ENCODE measurements at regions of chr18 and their contacts with region 1.

Region 1: DNA sequence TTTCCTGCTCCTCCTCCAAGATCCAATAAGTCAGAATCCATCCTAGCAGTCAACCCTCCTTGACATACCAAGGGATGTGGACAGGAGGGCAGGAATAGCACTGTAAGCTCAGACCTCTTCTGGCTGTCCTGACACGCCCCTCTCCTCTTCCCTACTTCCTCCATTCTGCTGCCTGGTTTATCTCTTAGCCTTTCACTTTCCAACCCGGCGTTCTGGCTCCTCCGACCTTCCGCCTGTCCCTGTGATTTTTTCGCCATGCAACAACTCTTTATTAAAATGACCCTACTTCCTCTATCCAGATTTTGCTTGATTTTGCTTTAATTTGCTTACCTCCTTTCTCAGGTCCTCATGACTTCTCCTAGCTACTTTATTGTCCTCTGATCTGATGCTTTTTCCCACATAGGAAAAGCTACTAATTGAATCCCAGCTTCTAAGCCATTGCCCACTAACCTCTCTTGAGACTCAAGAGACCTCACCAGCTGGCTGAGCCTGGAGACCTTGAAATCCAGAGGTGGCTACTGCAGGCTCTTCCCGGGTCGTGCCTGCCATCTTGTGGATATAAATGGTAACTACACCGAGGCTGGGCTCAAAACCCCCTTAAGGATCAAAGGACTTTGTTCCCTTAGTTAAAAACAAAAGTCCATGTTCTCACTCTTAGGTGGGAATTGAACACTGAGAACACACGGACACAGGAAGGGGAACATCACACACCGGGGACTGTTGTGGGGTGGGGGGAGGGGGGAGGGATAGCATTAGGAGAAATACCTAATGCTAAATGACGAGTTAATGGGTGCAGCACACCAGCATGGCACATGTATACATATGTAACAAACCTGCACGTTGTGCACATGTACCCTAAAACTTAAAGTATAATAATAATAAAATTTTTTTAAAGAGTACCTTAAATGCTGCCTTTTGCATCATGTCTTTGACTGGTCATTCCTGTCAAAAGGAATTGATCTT is 139.4 kb downstream of the AKAIN1 start:
- DNase-seq: peak; percentile 59 to 81 (median 79)
- H3K4me3 ChIP-seq: no peak overlapping the region
- H3K27ac ChIP-seq: no peak overlapping the region
- H3K4me1 ChIP-seq: peaks cover 5 to 26% (median 15%) of the 10 kb centered on the region in 4 experiments
- H3K27me3 ChIP-seq: no peaks in the 10 kb centered on the region

Region 2: GRCh38 chr18:4106407-4107033 is 951.1 kb before region 1 on chr18:
- CTCF ChIA-PET with region 1: interaction called, 63 read pairs
- POLR2A ChIA-PET with region 1: no interaction called
- DNase-seq: peak; percentile 43 to 77 (median 67)
- H3K4me3 ChIP-seq: no peak overlapping the region
- H3K27ac ChIP-seq: no peak overlapping the region
- H3K4me1 ChIP-seq: no peaks in the 10 kb centered on the region
- H3K27me3 ChIP-seq: peaks cover 0 to 6% (median 0%) of the 10 kb centered on the region in 5 experiments

Region 3: GRCh38 chr18:5073026-5073944 is 15.6 kb after region 1 on chr18:
- CTCF ChIA-PET with region 1: interaction called, 22 read pairs
- POLR2A ChIA-PET with region 1: no interaction called
- DNase-seq: peak; percentile 67 to 85 (median 78)
- H3K4me3 ChIP-seq: no peak overlapping the region
- H3K27ac ChIP-seq: no peak overlapping the region
- H3K4me1 ChIP-seq: no peaks in the 10 kb centered on the region
- H3K27me3 ChIP-seq: peaks cover 0 to 1% (median 0%) of the 10 kb centered on the region in 5 experiments